ENCODE measurements at regions of chr10 and their contacts with region 1.

Region 1: GRCh38 chr10:26556748-26557640 is 118.9 kb downstream of the APBB1IP start:
- DNase-seq: peak; percentile 8
- H3K4me3 ChIP-seq: no peak overlapping the region
- H3K27ac ChIP-seq: no peak overlapping the region
- H3K4me1 ChIP-seq: no peaks in the 10 kb centered on the region
- H3K27me3 ChIP-seq: no peaks in the 10 kb centered on the region
- CTCF ChIP-seq: peak; percentile 30 to 55
- POLR2A ChIP-seq: no peak

Region 2: DNA sequence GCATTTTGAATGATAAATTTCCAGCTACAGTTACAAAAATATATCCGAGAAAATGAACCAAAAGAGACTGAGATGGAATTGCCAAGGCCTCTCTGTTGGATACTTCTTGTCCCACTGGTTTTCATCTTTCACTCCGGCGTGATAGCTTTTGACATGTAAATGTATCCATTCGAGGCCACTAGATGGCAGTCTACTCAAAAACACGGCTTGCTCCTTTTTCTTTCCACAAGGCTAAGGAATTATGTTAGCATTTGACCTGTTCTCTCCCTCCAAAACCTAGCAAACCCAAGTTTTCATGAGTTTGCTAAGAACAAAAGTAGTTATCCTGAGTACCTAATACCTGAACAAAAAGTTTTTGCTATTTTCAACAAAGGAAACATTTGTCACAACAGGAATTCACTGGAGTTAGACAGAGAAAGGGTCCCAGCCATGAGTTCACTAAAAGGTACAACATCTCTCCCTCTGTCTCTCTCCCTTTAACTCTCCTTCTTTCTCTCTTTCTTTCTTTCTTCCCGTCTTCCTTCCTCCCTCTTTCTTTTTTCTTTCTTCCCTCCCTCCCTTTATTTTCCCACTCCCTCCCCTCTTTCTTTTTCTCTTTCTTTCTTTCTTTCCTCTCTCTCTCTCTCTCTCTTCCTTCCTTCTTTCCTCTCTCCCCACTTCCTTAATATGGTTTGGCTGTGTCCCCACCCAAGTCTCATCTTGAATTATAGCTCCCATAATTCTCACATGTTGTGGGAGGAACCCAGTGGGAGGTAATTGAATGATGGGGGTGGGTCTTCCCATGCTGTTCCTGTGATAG is 830.9 kb before region 1 on chr10:
- CTCF ChIA-PET with region 1: interaction called, 10 read pairs
- POLR2A ChIA-PET with region 1: no interaction called
- dilution Hi-C with region 1: no loop called
- intact Hi-C with region 1: no loop called
- DNase-seq: peak; percentile 42
- H3K4me3 ChIP-seq: no peak overlapping the region
- H3K27ac ChIP-seq: no peak overlapping the region
- H3K4me1 ChIP-seq: no peaks in the 10 kb centered on the region
- H3K27me3 ChIP-seq: no peaks in the 10 kb centered on the region
- CTCF ChIP-seq: peak; percentile 61 to 67
- POLR2A ChIP-seq: no peak

Region 3: GRCh38 chr10:25875556-25876165 is 681.3 kb before region 1 on chr10:
- CTCF ChIA-PET with region 1: interaction called, 4 read pairs
- POLR2A ChIA-PET with region 1: no interaction called
- dilution Hi-C with region 1: no loop called
- intact Hi-C with region 1: loop called (anchors 1 kb)
- DNase-seq: peak; percentile 47
- H3K4me3 ChIP-seq: no peak overlapping the region
- H3K27ac ChIP-seq: no peak overlapping the region
- H3K4me1 ChIP-seq: no peaks in the 10 kb centered on the region
- H3K27me3 ChIP-seq: no peaks in the 10 kb centered on the region
- CTCF ChIP-seq: peak; percentile 80 to 81
- POLR2A ChIP-seq: no peak

Region 4: DNA sequence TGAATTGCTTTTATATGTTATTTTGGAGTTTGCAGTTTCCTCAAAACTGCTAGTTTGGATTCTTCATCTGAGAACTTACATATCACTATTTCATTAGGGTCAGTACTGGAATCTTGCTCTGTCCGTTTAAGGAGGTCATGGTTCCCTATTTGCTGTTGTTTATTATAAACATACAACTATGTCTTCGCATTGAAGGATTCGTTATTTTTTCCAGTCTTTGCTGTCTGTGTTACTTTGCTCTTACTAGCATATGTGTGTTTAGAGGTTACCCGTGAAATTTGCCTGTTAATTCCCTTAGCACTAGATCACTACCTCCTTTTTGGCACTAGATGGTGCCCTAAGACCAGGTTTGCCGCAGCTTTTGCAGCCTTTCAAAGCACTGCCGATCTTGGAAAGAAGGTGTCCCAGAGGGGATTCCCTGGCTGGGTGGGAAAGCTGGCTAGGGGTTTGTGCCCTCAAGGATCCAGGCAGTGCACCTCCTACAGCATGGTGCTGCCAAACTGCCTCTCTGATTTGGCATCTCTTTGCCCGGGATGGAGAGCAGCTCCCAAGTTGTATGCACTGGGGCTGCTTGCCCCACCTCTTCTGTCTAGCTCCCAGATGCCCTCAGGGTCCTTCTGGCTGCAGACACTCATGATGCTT is 221.9 kb before region 1 on chr10:
- CTCF ChIA-PET with region 1: no interaction called
- POLR2A ChIA-PET with region 1: no interaction called
- dilution Hi-C with region 1: no loop called
- intact Hi-C with region 1: loop called (anchors 1 kb)
- DNase-seq: peak; percentile 28
- H3K4me3 ChIP-seq: no peak overlapping the region
- H3K27ac ChIP-seq: no peak overlapping the region
- H3K4me1 ChIP-seq: no peaks in the 10 kb centered on the region
- H3K27me3 ChIP-seq: no peaks in the 10 kb centered on the region
- CTCF ChIP-seq: peak; percentile 31 to 33
- POLR2A ChIP-seq: no peak

Region 5: GRCh38 chr10:26528715-26529393 is 28.1 kb before region 1 on chr10:
- CTCF ChIA-PET with region 1: no interaction called
- POLR2A ChIA-PET with region 1: no interaction called
- dilution Hi-C with region 1: no loop called
- intact Hi-C with region 1: no loop called
- DNase-seq: no peak
- H3K4me3 ChIP-seq: no peak overlapping the region
- H3K27ac ChIP-seq: no peak overlapping the region
- H3K4me1 ChIP-seq: no peaks in the 10 kb centered on the region
- H3K27me3 ChIP-seq: no peaks in the 10 kb centered on the region
- CTCF ChIP-seq: no peak
- POLR2A ChIP-seq: no peak

Region 6: GRCh38 chr10:26540601-26541000 is 16.4 kb before region 1 on chr10:
- CTCF ChIA-PET with region 1: no interaction called
- POLR2A ChIA-PET with region 1: no interaction called
- dilution Hi-C with region 1: no loop called
- intact Hi-C with region 1: no loop called
- DNase-seq: no peak
- H3K4me3 ChIP-seq: no peak overlapping the region
- H3K27ac ChIP-seq: no peak overlapping the region
- H3K4me1 ChIP-seq: no peaks in the 10 kb centered on the region
- H3K27me3 ChIP-seq: no peaks in the 10 kb centered on the region
- CTCF ChIP-seq: no peak
- POLR2A ChIP-seq: no peak

Measured in endothelial cell of umbilical vein (primary cell).